HEK293 (cell line): ENCODE measurements at regions of chr2 and their contacts with region 1.

Region 1: GRCh38 chr2:55961318-55961911 is 37.8 kb upstream of the EFEMP1 start:
- H3K4me3 ChIP-seq: no peak overlapping the region
- H3K27ac ChIP-seq: no peak overlapping the region
- H3K4me1 ChIP-seq: no peaks in the 10 kb centered on the region
- CTCF ChIP-seq: peak; percentile 25; the same call in 1 of the 2 replicates

Region 2: GRCh38 chr2:55718165-55719008 is 243.0 kb before region 1 on chr2:
- CTCF ChIA-PET with region 1: interaction called, 29 read pairs
- POLR2A ChIA-PET with region 1: no interaction called
- H3K4me3 ChIP-seq: no peak overlapping the region
- H3K27ac ChIP-seq: no peak overlapping the region
- H3K4me1 ChIP-seq: no peaks in the 10 kb centered on the region
- CTCF ChIP-seq: 0 out of 2 replicates have a peak, but pooled peaks have one; percentile 16

Region 3: DNA sequence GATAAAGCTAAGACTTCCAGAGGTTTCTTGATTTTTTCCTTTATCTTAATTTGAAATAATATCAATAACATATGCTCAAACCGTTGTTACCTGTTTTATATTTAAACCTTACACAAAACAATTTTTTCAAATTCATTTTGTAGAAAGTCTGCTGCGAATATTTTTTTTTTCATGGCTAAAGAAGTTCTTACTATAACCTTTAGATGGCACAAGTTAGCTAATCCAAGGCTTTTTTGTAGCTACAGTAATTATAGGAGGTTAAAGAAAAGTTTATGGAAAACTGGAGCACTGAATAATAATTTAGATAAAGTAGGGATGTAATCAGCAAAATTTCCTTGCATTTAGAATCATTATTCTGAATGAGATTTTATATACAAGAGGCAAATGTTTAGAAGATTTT is 189.8 kb before region 1 on chr2:
- CTCF ChIA-PET with region 1: interaction called, 88 read pairs
- POLR2A ChIA-PET with region 1: no interaction called
- H3K4me3 ChIP-seq: no peak overlapping the region
- H3K27ac ChIP-seq: no peak overlapping the region
- H3K4me1 ChIP-seq: no peaks in the 10 kb centered on the region
- CTCF ChIP-seq: peak; percentile 51

Region 4: GRCh38 chr2:55948176-55948921 is 13.1 kb before region 1 on chr2:
- CTCF ChIA-PET with region 1: interaction called, 15 read pairs
- POLR2A ChIA-PET with region 1: no interaction called
- H3K4me3 ChIP-seq: no peak overlapping the region
- H3K27ac ChIP-seq: no peak overlapping the region
- H3K4me1 ChIP-seq: peaks cover 21% of the 10 kb centered on the region
- CTCF ChIP-seq: no peak

Region 5: GRCh38 chr2:55976681-55977080 is 15.3 kb after region 1 on chr2:
- CTCF ChIA-PET with region 1: interaction called, 10 read pairs
- POLR2A ChIA-PET with region 1: no interaction called
- H3K4me3 ChIP-seq: no peak overlapping the region
- H3K27ac ChIP-seq: no peak overlapping the region
- H3K4me1 ChIP-seq: no peaks in the 10 kb centered on the region
- CTCF ChIP-seq: no peak

Region 6: DNA sequence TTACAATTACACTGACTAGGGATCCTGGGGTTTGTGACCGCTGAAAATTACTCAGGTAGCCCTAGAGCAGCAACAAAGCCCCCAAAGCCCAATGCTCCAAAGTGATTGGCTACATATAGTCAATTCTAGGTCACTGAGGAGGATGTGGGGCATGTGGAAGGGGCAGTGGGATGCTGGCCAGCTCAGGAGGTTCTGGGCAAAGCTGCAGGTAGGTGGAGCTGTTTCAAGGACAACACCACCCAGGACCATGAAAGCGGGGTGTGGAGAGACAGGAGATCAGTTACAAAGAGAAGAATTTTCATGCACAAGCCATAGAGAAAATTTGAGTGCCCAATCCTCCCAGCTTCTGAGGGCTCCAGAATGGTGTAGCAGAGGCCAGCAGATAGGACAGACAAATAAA is 147.4 kb after region 1 on chr2:
- CTCF ChIA-PET with region 1: no interaction called
- POLR2A ChIA-PET with region 1: no interaction called
- H3K4me3 ChIP-seq: no peak overlapping the region
- H3K27ac ChIP-seq: no peak overlapping the region
- H3K4me1 ChIP-seq: no peaks in the 10 kb centered on the region
- CTCF ChIP-seq: no peak